ENCODE measurements at regions of chr12 and their contacts with region 1.

Region 1: DNA sequence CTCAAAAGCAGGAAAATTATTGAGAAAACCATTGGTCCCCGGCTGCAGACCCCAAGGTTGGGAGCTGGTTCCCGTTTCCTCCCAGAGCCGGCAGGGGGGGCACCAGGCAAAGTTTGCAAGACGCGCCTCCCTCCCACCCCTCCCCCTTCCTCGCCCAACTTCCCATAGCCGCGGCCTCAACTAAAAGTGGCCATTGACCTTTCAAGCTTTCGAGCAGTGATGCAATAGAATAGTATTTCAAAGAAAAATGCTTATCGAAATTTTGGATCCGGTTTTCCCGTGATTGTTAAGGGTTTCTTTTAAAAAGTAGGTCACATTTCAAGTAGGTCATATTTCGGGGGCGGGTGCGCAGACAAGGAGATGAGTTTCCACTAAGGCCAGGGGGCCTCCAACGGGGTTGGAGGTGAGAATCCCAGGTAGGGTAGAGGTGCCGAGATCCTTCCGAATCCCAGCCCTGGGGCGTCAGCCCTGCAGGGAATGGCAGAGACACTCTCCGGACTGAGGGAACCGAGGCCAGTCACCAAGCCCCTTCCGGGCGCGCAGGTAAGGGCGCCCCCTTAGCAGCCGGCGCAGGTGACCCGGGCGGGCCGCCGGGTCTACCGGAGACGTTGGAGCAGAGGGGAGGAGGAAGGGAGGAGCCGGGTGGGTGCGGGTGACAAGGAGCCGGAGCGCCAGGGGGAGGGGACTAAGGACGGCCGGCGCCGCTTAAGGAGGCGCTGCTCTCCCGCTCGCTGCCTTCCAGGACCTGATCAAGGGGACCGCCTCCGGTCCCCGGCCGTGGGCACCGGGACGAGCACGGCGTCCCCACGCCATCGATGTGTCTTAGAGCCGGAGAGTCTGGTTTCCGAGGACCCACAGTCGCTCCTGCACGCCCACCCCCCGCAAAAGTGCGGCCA is 2.6 kb upstream of the SOCS2 start:
- DNase-seq: peak; percentile 88
- ATAC-seq: peak; percentile 82

Region 2: DNA sequence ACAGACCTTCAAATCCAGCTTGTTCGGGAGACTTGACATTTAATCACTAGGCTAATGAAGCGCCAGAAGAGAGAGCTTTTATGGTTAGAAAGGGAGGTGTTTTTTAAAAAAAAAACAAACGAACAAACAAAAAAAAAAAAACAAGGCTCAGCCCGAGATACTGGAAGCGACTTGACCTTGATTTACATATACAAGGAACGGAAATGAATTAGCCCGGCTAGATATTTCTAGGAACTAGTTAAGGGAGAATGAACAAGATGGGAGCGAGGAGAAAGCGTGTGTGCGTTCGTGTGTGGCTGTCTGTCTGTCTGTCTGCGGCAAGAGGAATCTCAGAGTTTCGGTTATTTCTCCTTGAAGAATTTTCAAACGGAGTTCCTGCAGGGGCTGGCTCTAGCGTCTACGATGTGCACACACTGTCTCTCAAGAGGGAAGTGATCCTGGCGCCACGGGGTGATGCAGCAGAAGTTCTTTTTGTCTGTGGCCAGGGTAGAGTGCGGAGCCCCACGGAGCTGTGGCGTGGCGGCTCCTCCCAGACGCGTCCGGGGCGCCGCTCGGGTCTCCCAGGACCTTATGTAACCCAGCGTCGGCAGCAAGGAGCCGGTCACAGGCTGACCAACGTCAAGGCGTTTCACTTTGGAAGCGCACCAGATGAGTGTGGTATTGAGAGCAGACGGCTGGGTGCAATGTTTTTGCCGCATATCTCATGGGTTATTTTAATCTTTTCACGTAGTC is 21.4 kb after region 1 on chr12:
- intact Hi-C with region 1: loop called (anchors 1 kb)
- DNase-seq: peak; percentile 92
- ATAC-seq: peak; percentile 97

Region 3: GRCh38 chr12:93742110-93742934 is 172.4 kb after region 1 on chr12:
- intact Hi-C with region 1: loop called (anchors 1 kb)
- DNase-seq: peak; percentile 88
- ATAC-seq: peak; percentile 92

Region 4: DNA sequence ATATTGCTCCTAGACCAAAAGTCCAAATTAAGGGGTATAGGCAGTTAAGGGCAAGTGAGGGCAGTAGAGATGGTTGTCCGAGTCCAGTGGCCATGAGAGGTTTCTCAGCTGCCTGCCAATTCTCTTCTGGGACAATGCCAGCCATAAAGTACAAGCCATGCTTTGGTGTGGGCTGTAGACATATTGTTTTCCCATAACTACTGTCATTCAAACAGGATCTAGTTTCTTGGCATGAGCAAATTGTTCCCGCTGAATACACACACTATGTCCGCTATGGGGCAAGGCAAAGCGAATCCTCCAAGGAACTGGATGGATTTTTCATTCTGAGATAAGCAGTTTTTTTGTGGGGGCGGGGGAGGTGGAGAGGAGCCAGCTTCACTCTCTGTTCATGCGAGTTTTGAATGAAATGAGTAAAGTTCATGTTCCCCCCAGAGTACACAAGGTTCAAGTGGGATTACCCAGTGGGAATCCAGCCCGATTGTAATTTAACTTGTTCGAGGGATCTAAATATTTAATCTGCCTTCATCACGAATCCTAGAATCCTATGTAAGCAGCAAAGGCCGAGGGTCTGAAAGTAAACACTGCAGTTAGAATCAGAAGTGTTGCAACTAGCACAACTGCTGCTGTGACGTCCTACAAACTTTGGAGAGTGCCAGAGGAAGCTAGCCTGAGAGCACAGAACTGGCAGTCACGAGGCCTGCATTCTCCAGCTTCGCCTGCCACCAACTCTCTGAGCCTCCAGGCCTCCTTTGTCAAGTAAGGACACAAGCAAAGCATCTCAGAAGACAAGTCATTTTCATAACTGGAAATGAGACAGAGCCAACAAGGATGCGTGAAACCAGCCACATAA is 244.3 kb after region 1 on chr12:
- intact Hi-C with region 1: loop called (anchors 5 kb)
- DNase-seq: peak; percentile 86
- ATAC-seq: peak; percentile 92

Region 5: DNA sequence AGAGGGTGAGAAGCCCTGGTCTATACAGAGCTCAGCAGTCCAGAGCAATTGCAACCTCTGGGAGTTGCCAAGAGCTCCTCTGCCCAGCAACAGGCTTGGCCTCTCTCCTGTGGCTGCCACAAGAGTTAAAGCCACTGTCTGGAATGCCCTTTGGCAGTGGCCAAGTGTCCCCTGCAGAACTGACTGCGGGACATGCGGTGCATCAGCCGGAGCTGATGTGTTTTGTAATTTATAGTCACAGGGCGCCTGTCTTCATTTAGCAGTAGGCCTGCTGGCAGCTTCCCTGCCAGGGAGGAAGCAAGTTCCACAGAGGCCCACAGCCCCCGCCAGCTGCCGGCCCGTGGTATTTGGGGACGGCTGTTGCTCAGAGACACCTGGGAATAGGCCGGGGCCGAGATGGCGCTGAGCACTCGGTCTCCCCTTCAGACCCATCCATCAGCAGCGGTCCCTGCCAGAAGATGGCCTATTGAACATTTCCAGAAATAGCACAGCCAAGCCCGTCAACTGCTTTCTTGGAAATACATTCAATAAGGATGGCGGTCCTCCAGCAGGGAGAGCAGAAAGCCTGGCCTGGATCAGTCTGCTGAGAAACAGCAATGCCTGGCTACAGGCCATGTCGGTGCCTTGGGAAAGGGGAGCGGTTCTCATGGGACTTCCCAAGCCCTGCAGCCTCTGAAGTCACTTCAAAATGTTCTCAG is 324.6 kb after region 1 on chr12:
- intact Hi-C with region 1: loop called (anchors 1 kb)
- DNase-seq: peak; percentile 94
- ATAC-seq: peak; percentile 95

Region 6: DNA sequence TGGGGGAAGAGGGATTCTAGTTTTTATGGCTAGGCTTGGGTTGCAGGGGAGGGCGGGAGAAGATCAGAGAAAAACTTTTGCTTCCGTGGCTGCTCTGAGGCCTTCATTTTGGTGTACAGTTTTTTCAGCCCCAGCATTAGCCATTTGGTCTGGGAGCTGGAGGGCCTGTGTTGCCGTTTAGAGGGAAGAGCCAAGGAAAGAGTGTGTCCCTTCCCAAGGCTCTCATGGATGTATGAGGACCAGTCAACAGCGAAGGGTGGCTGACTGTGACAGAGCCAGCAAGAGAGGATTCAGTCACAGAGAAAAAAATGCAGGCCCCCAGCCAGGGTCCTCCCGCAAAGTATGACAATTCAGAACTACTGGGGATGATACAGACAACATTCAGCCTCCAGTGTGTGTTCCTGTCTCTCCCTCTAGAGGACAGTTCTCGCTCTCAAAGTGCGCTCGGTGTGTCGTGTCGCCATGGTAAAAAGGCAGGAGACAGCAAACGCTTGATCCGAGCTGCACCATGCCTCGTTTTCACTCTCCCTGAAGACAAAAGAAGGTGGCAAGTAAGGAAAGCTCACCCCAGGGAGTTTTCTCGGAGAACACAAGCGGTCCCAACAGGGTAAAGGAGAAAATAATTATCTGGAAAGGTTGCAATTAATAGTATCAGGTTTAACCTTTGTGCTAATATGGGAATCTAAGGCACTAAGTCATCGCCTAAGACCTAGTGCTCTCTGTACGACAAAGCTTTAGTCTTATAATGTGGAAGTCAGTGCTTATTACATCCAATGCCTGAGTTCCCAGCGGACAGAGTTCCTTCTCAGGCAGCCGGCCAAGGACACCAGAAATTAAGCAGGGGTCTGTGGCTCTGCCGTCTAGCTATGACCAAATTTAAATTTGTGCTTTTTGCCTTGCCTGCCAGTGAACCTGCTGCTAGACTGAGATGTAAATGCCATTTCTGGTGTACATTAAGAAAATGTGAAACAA is 421.2 kb after region 1 on chr12:
- intact Hi-C with region 1: loop called (anchors 1 kb)
- DNase-seq: no peak
- ATAC-seq: peak; percentile 93

Region 7: GRCh38 chr12:94101738-94102660 is 532.1 kb after region 1 on chr12:
- intact Hi-C with region 1: loop called (anchors 1 kb)
- DNase-seq: peak; percentile 94
- ATAC-seq: peak; percentile 91